ENCODE measurements at regions of chr17 and their contacts with region 1.

Region 1: DNA sequence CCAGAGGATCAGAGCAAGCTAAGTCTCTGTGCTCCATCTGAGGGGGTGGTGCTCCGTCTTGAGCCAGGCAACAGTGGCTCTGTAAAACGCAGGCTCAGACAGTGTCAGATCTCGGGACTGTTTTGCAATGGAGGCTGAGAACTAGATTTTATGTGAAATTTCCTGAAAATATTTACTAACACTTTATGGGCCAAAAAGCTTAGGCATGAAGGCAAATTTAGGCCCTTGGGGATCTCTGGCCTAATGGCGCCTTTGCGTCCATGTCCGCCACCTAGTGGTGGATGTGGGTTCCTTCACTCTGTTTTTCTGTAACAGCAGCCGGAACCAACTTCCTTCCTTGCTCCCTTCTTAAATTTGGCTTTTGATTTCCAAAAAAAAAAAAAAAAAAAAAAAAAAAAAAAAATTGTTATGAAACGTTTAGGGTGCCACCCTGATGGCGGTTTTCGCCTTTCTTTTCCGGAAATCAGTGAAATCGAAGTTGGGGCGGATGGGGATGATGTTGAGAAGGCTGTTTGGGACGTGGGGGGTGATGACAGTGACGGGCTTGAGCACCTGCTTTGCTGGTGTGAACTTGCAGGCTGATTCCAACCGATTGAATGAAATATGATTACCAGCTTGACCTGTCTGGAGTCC is 14.0 kb upstream of the ELAC2 start:
- DNase-seq: peak in 1 of 2 experiments; percentile 66
- H3K4me3 ChIP-seq: no peak overlapping the region
- H3K27ac ChIP-seq: no peak overlapping the region
- H3K4me1 ChIP-seq: no peaks in the 10 kb centered on the region
- H3K27me3 ChIP-seq: no peaks in the 10 kb centered on the region
- CTCF ChIP-seq: peak; percentile 63 to 83 (median 74)
- EP300 ChIP-seq: no peak
- POLR2A ChIP-seq: no peak
- RAD21 ChIP-seq: peak; percentile 34 to 39; a peak in 2 of 4 replicates

Region 2: GRCh38 chr17:12866244-12866643 is 165.6 kb before region 1 on chr17:
- CTCF ChIA-PET with region 1: no interaction called
- POLR2A ChIA-PET with region 1: no interaction called
- DNase-seq: no peak
- H3K4me3 ChIP-seq: no peak overlapping the region
- H3K27ac ChIP-seq: no peak overlapping the region
- H3K4me1 ChIP-seq: no peaks in the 10 kb centered on the region
- H3K27me3 ChIP-seq: no peaks in the 10 kb centered on the region
- CTCF ChIP-seq: no peak
- EP300 ChIP-seq: no peak
- POLR2A ChIP-seq: no peak
- RAD21 ChIP-seq: no peak

Region 3: GRCh38 chr17:13017659-13018459 is 14.0 kb before region 1 on chr17 and contains the start of gene ELAC2:
- CTCF ChIA-PET with region 1: interaction called, 45 read pairs
- POLR2A ChIA-PET with region 1: interaction called, 7 read pairs
- DNase-seq: peak; percentile 92 to 95
- H3K4me3 ChIP-seq: peak within 1 kb of the TSS; percentile 74 to 94 (median 88)
- H3K27ac ChIP-seq: peak within 1 kb of the TSS; percentile 63; the same call in 1 of the 2 replicates
- H3K4me1 ChIP-seq: peaks cover 0 to 3% (median under 1%) of the 10 kb centered on the region in 4 experiments; a peak in 2 of 7 replicates
- H3K27me3 ChIP-seq: no peaks in the 10 kb centered on the region
- CTCF ChIP-seq: no peak
- EP300 ChIP-seq: no peak
- POLR2A ChIP-seq: peak; percentile 86 to 95
- RAD21 ChIP-seq: no peak
- total RNA-seq, gene ELAC2: 91.6 and 94.9 TPM in 2 replicates

Region 4: GRCh38 chr17:13051915-13052314 is 20.1 kb after region 1 on chr17:
- CTCF ChIA-PET with region 1: interaction called, 52 read pairs
- POLR2A ChIA-PET with region 1: no interaction called
- DNase-seq: no peak
- H3K4me3 ChIP-seq: no peak overlapping the region
- H3K27ac ChIP-seq: no peak overlapping the region
- H3K4me1 ChIP-seq: no peaks in the 10 kb centered on the region
- H3K27me3 ChIP-seq: no peaks in the 10 kb centered on the region
- CTCF ChIP-seq: no peak
- EP300 ChIP-seq: no peak
- POLR2A ChIP-seq: no peak
- RAD21 ChIP-seq: no peak

Region 5: GRCh38 chr17:13086142-13086769 is 54.4 kb after region 1 on chr17:
- CTCF ChIA-PET with region 1: interaction called, 17 read pairs
- POLR2A ChIA-PET with region 1: no interaction called
- DNase-seq: no peak
- H3K4me3 ChIP-seq: no peak overlapping the region
- H3K27ac ChIP-seq: no peak overlapping the region
- H3K4me1 ChIP-seq: no peaks in the 10 kb centered on the region
- H3K27me3 ChIP-seq: no peaks in the 10 kb centered on the region
- CTCF ChIP-seq: no peak
- EP300 ChIP-seq: no peak
- POLR2A ChIP-seq: no peak
- RAD21 ChIP-seq: no peak

Region 6: GRCh38 chr17:13106171-13106570 is 74.3 kb after region 1 on chr17:
- CTCF ChIA-PET with region 1: interaction called, 26 read pairs
- POLR2A ChIA-PET with region 1: no interaction called
- DNase-seq: no peak
- H3K4me3 ChIP-seq: no peak overlapping the region
- H3K27ac ChIP-seq: no peak overlapping the region
- H3K4me1 ChIP-seq: no peaks in the 10 kb centered on the region; a peak in 1 of 7 replicates
- H3K27me3 ChIP-seq: no peaks in the 10 kb centered on the region
- CTCF ChIP-seq: no peak
- EP300 ChIP-seq: no peak
- POLR2A ChIP-seq: no peak
- RAD21 ChIP-seq: no peak

Measured in H1 (cell line).